Heart left ventricle (tissue), 16 donors: ENCODE measurements at regions of chr14 and their contacts with region 1.

Region 1: DNA sequence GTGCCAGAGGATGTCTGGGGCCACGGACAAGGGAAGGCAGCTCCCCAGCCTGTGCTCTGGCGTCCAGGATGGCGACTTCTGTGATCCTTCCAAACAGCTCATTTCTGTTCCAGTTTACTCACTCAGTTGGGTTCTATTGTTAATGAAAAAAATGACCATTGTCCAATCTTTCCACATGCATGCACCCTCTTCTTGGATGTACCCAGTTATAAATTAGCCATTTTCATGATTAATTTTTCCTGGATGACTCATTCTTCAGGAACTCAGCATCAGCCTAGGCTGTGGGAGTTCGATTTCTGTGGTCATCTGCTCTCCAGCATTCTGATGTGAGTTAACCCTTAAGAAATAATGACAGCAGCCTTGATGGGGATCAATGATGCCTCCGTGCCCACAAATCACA is 926.8 kb downstream of the BCL11B start:
- DNase-seq: no peak
- ATAC-seq: no peak
- H3K4me3 ChIP-seq: no peak overlapping the region
- H3K27ac ChIP-seq: no peak overlapping the region
- H3K4me1 ChIP-seq: no peaks in the 10 kb centered on the region
- H3K27me3 ChIP-seq: peaks cover 0 to 7% (median 0%) of the 10 kb centered on the region in 9 donors
- CTCF ChIP-seq: no peak
- POLR2A ChIP-seq: no peak

Region 2: DNA sequence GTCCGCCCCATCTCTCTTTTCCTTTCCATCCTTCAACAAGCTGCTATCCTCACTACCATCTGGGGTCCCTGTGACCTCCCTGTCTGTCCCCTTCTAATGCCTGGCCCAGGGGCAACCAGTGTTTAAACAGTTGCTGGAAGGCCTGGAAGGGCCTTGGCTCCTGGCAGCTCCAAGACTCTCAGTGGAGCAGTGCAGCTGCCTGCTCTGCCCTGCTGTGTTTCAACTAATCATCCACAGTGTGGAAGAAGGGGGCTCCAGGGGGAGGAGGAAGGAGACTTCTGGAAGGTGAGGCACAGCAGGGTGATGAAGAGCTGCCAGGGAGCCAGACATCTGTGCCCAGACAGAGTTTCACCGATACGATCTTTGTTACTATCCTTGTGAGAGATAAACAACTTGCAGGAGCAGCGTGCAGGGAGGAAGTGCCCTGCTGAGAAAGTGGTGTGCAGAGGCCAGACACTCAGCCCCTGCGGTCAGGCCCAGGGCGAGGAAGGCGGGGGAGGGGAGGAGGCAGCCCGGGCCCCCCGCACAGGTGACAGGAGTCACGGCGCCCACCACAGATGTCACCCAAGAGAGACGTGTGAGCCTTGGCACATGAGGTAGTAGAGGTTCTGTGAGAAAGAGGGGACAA is 135.0 kb before region 1 on chr14:
- intact Hi-C with region 1: no loop called
- DNase-seq: no peak
- ATAC-seq: no peak
- H3K4me3 ChIP-seq: no peak overlapping the region
- H3K27ac ChIP-seq: peak overlapping the region in 1 of 12 donors; percentile 55
- H3K4me1 ChIP-seq: peaks cover 0 to 4% (median 0%) of the 10 kb centered on the region in 12 donors
- H3K27me3 ChIP-seq: peaks cover 0 to 12% (median 0%) of the 10 kb centered on the region in 9 donors
- CTCF ChIP-seq: no peak
- POLR2A ChIP-seq: no peak

Region 3: GRCh38 chr14:98298481-98299244 is 46.5 kb before region 1 on chr14:
- intact Hi-C with region 1: no loop called
- DNase-seq: no peak
- ATAC-seq: no peak
- H3K4me3 ChIP-seq: no peak overlapping the region
- H3K27ac ChIP-seq: no peak overlapping the region
- H3K4me1 ChIP-seq: no peaks in the 10 kb centered on the region
- H3K27me3 ChIP-seq: peaks cover 0 to 14% (median 0%) of the 10 kb centered on the region in 9 donors
- CTCF ChIP-seq: no peak
- POLR2A ChIP-seq: no peak

Region 4: DNA sequence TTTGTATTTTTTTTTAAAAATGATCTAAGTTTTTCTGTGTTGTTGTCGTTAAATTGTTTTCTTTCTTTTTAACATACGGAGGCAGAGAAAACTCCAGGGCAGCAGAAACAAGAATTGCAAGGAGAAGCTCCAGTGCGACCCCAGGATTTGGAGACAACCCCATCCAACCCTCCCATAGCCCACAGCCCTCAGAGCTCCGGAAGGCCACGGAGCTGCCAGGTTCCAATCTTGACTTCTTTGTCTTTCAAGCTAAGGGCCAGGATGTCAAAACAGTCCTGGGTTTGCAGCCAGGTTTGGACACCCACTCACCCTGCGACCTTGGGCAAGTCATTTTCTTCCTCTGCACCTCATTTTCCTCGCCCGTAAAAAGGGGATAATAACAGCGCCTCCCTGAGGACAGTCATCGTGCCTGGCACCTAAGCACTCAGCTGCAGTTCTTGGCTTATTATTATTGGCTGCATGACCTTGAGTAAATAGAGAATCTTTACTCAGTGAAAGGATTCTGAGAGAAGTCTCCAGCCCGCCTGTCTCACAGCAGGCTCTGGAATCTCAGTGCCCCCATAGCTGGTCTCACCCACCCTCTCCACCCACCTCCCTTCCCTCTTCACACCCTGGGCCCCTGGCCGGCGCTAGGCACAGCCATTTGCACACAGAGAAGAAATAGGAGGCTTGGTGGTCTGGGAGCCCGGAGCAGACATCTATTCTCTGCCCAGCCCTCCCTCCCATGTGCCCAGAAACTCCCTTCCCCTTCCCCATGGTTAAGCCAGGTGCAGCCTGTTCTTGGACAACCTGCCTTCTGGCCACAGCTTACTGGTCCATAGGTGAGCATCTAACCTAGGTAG is 1006.2 kb after region 1 on chr14:
- intact Hi-C with region 1: loop called in 1 of 10 experiments (anchors 10 kb)
- DNase-seq: no peak
- ATAC-seq: no peak
- H3K4me3 ChIP-seq: no peak overlapping the region
- H3K27ac ChIP-seq: no peak overlapping the region
- H3K4me1 ChIP-seq: no peaks in the 10 kb centered on the region
- H3K27me3 ChIP-seq: no peaks in the 10 kb centered on the region
- CTCF ChIP-seq: no peak
- POLR2A ChIP-seq: no peak